ENCODE measurements at regions of chr17 and their contacts with region 1.

Region 1: DNA sequence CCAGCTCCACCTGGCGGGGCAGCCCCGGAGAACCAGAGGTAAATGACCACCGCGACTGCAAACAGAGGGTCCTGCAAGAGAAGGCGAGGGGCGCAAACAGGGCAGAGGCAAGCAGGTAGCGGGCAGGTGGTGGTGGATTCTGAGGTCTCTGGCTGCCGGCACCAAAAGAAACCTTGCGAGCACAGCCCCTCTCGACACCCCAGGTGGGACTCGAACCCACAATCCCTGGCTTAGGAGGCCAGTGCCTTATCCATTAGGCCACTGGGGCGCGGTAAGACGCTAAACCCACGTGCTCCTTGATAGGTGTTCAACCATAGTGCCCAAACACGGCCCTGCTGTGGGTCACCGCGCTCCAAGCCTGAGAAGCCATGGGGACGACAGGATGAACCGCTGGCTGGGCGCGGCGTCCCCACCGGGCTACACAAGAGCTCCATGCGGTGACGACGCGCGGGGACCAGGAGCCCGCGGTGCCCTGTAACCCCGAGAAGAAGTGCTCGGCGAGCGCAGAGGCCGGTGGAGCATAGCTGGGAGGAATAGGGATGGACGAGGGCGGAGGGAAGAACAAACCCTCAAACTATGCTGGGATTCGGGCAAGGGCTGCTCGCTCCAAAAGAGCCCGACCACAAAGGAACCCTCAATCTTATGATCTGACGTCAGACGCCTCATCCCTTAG is 12.4 kb downstream of the ATP5PD start:
- DNase-seq: peak; percentile 83
- H3K4me3 Mint-ChIP-seq: peak overlapping the region; percentile 93
- H3K27ac Mint-ChIP-seq: peak overlapping the region; percentile 95
- H3K4me1 Mint-ChIP-seq: peaks cover 32% of the 10 kb centered on the region
- H3K27me3 Mint-ChIP-seq: no peaks in the 10 kb centered on the region

Region 2: GRCh38 chr17:74686761-74687160 is 347.6 kb before region 1 on chr17:
- intact Hi-C with region 1: no loop called
- DNase-seq: no peak
- H3K4me3 Mint-ChIP-seq: no peak overlapping the region
- H3K27ac Mint-ChIP-seq: no peak overlapping the region
- H3K4me1 Mint-ChIP-seq: peaks cover 18% of the 10 kb centered on the region
- H3K27me3 Mint-ChIP-seq: peaks cover 16% of the 10 kb centered on the region

Region 3: DNA sequence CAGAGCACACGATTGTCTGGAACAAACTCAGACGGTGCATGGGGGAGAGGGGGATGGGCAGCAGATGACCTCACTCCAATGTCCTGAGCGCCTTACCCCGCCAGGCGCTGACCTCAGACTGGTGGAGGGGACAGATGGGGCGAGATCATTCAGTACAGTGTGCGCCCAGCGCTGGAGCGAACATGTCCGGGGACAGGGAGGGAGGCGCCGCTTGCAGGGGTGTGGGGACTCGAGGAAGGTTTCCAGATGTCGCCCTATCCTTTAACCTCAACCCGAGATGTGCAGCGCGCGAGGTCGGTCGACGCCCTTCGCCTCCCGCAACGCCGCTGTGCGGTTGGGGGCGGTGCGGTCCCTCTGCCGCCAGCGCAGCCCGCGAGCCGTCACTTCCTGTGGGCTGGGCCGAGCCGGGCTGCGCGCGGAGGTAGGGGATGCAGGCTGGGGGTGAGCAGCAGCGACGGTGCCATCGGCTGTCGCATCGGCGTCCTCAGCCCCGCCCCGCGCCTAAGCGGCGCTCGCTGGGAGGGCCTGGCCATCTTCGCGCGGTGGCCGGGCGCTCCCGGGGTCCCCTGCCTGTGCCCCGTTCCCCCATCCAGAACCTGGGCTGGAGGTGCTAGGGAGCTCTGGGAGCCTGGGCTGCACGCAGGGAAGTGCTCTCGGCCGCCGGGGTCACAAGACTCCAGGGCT is 52.3 kb before region 1 on chr17:
- intact Hi-C with region 1: loop called (anchors 5 kb)
- DNase-seq: peak; percentile 77
- H3K4me3 Mint-ChIP-seq: peak overlapping the region; percentile 76
- H3K27ac Mint-ChIP-seq: peak overlapping the region; percentile 29
- H3K4me1 Mint-ChIP-seq: peaks cover 17% of the 10 kb centered on the region
- H3K27me3 Mint-ChIP-seq: peaks cover 37% of the 10 kb centered on the region

Region 4: DNA sequence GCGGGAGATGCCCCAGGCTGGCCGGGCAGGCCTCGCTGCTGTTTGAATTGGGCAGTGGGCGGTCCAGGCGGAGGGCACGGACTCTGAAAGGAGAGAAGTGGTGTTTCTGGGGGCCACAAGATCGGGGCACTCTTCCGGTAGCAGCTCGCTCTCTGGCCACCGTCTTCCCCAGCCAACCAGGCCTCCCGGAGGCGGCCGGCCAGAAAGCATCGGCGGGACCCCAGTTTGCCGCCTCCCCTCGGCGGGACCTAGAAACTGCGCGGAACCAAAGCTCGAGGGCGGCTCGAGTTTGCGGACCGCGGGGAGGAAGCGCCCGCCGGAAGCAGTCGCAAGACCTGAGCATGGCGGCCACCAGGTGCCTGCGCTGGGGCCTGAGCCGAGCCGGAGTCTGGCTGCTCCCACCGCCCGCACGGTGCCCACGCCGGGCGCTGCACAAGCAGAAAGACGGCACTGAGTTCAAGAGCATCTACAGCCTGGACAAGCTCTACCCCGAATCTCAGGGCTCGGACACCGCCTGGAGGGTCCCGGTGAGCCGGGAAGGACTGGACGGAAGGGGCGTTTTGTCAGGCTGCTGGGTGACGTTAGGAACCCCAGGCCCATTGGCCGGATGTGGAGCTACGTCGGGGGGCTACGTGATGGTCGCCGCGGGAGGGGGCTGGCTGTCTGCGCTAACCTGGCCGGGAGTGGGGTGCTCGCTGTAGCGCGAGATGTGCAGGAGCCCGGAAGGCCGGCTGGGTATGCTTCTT is 21.9 kb before region 1 on chr17 and contains the start of gene MRPL58:
- intact Hi-C with region 1: loop called (anchors 2 kb)
- DNase-seq: peak; percentile 79
- H3K4me3 Mint-ChIP-seq: peak within 1 kb of the TSS; percentile 95
- H3K27ac Mint-ChIP-seq: peak within 1 kb of the TSS; percentile 86
- H3K4me1 Mint-ChIP-seq: peaks cover 22% of the 10 kb centered on the region
- H3K27me3 Mint-ChIP-seq: no peaks in the 10 kb centered on the region
- total RNA-seq, gene MRPL58: 65.4 and 68.1 TPM in 2 replicates

Region 5: DNA sequence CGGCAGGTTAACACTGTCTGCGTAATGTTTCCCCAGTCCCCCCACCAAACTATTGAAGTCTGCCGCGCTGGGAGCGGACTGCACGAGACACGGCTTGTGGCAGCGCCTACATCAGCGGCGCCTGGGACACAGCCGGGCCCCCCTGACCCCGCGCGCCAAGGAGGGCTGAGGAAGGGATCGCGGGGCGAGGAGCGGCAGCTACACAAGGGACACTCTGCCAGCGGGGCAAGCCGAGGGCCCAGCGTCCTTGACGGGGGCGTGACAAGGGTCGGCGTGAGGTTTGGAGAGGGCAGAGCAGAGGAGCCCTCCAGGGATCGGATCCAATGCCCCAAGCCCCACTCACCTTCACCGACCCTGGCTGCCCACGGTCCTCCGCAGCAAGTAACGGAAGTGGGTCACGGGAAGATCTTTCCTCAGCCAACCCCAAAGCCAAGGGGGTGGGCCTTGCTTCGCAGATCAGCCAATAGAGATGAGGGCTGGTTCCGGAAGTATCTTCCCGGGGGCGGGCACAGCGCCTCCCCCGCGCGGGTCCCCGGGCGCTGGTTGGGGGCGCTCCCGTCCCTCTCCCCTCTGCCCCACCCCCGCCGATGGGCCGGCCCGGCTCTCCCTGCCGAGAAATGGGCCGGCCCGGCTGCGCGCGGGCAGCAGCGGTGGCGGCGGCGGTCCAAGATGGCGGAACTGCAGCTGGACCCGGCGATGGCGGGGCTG is 12.4 kb after region 1 on chr17 and contains the starts of genes ATP5PD and KCTD2:
- intact Hi-C with region 1: loop called (anchors 1 kb)
- DNase-seq: peak; percentile 93
- H3K4me3 Mint-ChIP-seq: peak within 1 kb of the TSS; percentile 98
- H3K27ac Mint-ChIP-seq: peak within 1 kb of the TSS; percentile 86
- H3K4me1 Mint-ChIP-seq: peaks cover 35% of the 10 kb centered on the region
- H3K27me3 Mint-ChIP-seq: no peaks in the 10 kb centered on the region
- total RNA-seq, gene ATP5PD: 166 and 170 TPM in 2 replicates
- total RNA-seq, gene KCTD2: 18.0 and 20.7 TPM in 2 replicates

Region 6: DNA sequence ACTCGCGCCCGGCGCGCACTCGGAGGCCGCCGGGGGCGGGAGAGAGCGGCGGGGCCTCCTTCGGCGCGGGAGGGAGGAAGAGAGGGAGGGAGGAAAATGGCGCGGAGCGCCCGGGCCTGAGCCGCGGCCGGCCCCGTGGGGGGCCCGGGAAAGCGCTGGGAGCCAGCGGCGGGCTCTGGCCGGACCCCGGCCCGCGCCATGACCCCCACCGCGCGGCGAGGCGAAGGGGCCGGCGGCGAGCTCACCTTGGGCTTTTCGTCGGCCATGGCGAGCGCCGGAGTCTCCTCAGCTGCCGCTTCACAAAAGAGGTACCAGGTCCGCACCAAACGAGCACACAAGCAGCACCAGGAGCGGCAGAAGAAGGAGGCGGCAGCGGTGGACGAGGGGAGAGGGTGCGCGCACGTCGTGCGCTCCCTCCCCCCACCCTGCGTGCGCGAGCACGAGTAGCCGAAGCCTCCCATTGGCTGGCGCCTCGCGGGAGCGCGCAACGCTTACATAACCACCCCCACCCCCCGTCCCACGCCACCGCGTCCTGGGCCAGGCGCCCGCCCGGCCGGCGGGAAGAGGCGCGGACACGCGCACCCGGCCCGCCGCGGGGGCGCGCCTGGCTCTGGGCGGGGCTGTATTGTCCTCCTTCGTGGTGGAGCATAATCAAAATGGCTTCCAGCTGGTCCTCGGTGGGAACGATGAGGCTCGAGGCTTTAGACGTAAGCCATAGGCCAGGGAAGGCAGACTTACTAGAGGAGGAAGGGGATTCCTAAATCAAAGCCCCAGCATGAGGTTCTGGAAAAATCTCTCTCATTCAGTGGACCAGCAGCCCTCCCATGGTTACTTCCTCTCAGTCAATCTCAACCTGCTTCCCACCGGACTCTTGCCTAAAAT is 148.4 kb after region 1 on chr17 and contains the start of gene SUMO2:
- intact Hi-C with region 1: no loop called
- DNase-seq: peak; percentile 92
- H3K4me3 Mint-ChIP-seq: peak within 1 kb of the TSS; percentile 88
- H3K27ac Mint-ChIP-seq: peak within 1 kb of the TSS; percentile 98
- H3K4me1 Mint-ChIP-seq: peaks cover 28% of the 10 kb centered on the region
- H3K27me3 Mint-ChIP-seq: no peaks in the 10 kb centered on the region
- total RNA-seq, gene SUMO2: 653 and 679 TPM in 2 replicates

Measured in activated T-helper 2 cell treated with anti-CD3 and anti-CD28 coated beads, Interferon-gamma antibody, Interleukin-2, Interleukin-4, amounts not matched to agents 10 μg/mL and 5 μg/mL and 100 μg/mL, durations not matched to agents 14 hours and 24 hours and 36 hours (primary cell).